ENCODE measurements at regions of chr3 and their contacts with region 1.

Region 1: DNA sequence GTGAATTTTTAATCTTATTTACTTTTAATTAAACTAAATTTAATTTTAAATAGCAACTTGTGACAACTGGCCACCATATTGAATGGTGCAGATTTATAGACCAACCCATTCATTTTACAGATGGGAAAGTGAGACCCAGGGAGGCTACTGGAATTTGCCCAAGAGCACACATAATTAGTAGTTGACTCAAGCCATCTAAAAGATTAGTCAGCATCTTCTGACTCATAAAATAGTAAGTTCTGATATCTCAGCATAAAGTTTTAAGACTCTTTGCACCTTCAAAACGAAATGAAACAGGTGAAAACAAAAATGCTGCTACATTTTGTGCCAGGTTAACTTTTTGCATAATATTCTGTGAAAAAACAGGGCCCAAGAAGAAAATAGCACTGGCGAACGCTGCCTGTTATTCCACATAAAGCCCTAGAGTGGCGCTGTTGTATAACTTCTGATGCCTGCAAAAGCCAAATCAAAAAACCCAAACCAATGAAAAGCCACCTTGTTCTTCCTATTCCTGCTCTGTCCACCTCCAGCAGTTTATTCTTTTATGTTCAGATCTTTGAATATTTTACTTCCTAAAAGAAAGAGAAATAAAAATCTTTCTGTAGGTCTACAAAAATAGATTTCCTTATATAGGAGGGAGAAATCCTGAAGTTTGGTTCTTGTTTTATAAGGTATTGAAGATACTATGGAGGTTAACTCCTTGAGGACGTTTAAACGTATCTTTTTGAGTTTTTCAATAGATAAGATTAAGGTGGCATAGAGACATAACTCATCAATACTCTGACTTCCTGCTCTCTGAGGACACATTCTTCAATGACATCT is 62.8 kb downstream of the OTOL1 start:
- DNase-seq: peak; percentile 71
- H3K4me3 ChIP-seq: 0 out of 2 replicates have a peak overlapping the region, but pooled peaks have one; percentile 20
- H3K27ac ChIP-seq: no peak overlapping the region
- H3K4me1 ChIP-seq: 0 out of 2 replicates have a peak, but pooled peaks cover 7% of the 10 kb centered on the region
- H3K27me3 ChIP-seq: no peaks in the 10 kb centered on the region

Region 2: DNA sequence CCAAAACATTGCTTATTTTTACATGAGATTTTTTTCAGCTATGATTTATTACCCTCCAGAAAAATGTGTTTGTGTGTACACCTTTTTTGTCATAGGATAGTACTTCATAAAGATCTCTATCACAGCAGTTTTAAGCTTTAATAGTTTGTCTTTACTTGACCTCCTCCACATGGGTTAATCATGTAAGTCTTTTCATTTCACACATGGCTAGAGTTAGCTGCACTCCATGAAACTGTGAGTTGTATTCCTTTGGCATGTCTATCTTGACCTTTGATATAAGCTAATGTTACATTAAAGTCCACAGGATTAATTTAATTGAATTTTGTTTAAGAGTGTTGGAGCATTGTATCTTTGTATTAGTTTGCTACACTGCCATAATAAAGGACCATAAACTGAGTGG is 154.3 kb after region 1 on chr3:
- in situ Hi-C with region 1: no loop called
- DNase-seq: no peak
- H3K4me3 ChIP-seq: no peak overlapping the region
- H3K27ac ChIP-seq: no peak overlapping the region
- H3K4me1 ChIP-seq: no peaks in the 10 kb centered on the region
- H3K27me3 ChIP-seq: no peaks in the 10 kb centered on the region

Region 3: DNA sequence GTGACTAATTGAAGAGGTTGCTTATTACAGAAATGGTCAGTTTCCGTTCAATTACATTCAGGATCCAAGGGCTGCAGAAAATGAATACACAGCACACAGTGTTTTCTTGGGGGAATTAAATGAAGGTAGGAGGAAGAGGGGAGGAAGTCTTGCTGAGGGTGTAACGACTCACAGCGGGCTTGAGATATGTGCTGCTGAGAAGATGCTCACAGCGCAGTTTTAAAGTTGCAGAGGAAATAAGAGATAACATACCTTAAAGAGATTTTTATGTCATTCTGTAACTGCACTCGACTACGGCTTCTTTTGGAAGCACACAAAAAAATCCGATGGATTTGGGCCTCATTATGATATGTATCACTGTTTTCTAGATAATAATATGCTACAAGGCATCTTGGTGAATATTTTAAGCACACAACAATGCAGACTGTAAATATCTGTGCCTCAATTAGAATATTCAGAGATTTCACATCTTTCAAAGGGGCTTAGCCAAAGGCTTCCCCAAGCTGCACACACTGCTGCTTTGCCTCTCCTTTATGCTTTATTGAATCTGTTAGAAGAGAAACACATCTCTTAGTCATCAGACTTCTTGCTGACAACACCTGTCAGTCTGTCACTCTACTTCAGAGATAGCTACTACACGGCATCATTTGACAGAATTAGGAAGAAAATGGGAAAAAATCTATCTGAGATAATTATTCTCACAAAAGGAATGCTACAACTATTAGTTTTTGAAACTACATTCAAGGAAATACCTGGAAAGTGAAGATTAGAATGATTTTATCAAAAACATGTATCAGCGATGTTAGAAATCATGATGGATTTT is 710.5 kb after region 1 on chr3:
- in situ Hi-C with region 1: loop called (anchors 25 kb)
- DNase-seq: no peak
- H3K4me3 ChIP-seq: no peak overlapping the region
- H3K27ac ChIP-seq: no peak overlapping the region
- H3K4me1 ChIP-seq: no peaks in the 10 kb centered on the region
- H3K27me3 ChIP-seq: no peaks in the 10 kb centered on the region

Region 4: GRCh38 chr3:162799910-162800309 is 1240.5 kb after region 1 on chr3:
- in situ Hi-C with region 1: loop called (anchors 25 kb)
- DNase-seq: peak; percentile 53
- H3K4me3 ChIP-seq: no peak overlapping the region
- H3K27ac ChIP-seq: no peak overlapping the region
- H3K4me1 ChIP-seq: no peaks in the 10 kb centered on the region
- H3K27me3 ChIP-seq: no peaks in the 10 kb centered on the region

Measured in GM23248 (cell line).